ENCODE measurements at regions of chr16 and their contacts with region 1.

Region 1: DNA sequence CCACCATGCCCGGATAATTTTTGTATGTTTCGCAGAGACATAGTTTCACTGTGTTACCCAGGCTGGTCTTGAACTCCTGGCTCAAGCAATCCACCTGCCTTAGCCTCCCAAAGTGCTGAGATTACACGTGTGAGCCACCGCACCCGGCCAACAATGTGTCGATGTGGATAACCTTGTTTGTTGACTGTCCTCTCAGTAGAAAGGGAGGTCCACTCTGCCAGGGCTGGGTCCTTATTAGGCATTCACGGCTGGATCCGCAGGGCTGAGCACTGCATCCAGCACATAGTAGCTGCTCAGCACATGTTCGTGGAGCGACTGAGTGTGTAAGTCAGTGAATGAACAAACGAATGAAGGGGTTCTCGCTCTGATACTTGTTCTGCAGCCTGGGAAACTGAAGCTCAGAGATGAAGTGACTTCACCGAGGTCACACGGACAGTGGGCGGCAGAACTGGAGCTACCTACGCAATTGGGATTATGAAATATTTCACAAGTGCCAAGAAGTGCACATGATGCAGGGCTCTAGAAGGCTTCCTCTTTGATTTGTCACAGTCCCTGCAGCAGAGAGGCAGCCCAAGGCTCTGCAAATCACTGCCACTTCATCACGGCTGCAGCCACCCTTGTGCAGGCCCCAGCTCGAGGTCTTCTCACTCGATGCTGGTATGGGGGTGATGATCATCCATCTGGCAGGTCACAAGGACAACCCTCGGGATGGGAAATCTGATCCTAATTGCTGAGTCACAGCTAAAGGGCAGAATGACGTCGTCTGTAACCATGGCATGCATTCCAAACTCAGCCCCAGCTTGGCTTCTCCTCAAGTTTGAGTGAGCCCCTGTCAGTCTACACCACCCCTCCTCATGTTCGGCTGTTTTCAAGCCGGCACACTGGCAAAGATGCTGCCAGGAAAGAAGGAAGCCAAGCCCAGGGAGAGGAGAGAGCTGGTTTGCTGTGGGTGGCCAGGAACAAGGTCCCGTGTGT is 28.0 kb upstream of the SNN start:
- DNase-seq: no peak
- H3K4me3 ChIP-seq: no peak overlapping the region
- H3K4me3 Mint-ChIP-seq: no peak overlapping the region
- H3K27ac ChIP-seq: no peak overlapping the region
- H3K27ac Mint-ChIP-seq: peak overlapping the region in 1 of 7 donors; percentile 47
- H3K4me1 ChIP-seq: peaks cover 14% of the 10 kb centered on the region
- H3K4me1 Mint-ChIP-seq: peaks cover 5 to 15% (median 12%) of the 10 kb centered on the region in 4 donors
- H3K27me3 ChIP-seq: no peaks in the 10 kb centered on the region
- H3K27me3 Mint-ChIP-seq: no peaks in the 10 kb centered on the region

Region 2: DNA sequence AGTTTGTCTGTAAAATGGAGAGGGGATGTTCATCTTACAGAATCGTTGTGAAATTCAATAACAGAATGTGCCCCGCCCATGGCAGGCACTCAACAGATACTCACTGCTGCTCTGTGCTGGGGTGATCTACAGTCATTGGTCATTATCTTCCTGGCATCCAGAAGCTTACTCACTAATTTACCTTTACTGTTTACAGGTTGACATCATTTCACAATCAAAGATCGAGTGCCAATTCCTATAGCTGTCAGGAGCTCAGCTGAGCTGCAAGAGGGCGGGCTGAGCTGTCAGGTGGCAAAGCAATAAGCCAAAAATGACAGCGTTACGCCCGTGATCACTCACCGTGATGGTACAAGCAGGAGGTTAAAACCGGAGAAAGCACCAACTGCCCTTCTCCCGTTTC is 104.7 kb before region 1 on chr16:
- CTCF ChIA-PET with region 1: interaction called, 206 read pairs
- POLR2A ChIA-PET with region 1: interaction called, 4 read pairs
- intact Hi-C with region 1: loop called (anchors 1 kb)
- DNase-seq: no peak
- H3K4me3 ChIP-seq: no peak overlapping the region
- H3K4me3 Mint-ChIP-seq: no peak overlapping the region
- H3K27ac ChIP-seq: no peak overlapping the region
- H3K27ac Mint-ChIP-seq: no peak overlapping the region
- H3K4me1 ChIP-seq: no peaks in the 10 kb centered on the region
- H3K4me1 Mint-ChIP-seq: peaks cover 5 to 11% (median 10%) of the 10 kb centered on the region in 4 donors
- H3K27me3 ChIP-seq: no peaks in the 10 kb centered on the region
- H3K27me3 Mint-ChIP-seq: no peaks in the 10 kb centered on the region

Region 3: DNA sequence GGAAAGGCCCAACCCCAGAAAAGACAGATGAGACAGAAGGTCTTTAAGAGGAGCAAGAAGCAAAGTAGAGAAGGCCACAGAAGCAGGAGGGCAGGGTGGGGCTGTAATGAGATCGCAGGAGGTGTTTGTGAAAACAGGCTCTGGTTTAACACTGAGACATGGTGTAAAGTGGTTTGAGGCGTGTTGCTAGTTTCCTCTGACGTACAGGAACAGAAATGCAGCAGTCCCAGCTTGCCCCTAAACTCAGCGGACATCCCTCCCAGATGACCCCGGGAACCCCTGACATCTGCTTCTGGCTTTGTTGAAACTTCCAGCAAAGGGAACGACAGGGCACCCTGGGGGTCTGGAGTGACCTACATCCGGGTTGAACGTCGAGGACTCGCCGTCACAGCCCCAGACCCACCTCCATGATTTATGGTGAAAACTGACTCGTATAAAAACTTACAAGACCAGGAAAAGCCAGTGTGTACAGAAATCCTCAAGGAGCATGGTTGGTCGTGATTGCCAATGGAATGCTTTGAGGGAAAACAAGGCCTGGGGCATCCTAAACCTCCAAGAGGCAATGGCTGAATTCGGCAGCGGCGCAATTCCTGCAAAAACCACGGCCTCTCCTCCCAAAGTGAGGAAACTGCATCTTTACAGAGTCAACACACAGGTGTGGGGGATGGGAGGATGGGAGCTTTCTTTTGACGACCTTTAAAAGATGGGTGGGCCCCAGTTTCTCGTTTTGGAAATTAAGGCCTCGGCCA is 79.3 kb before region 1 on chr16:
- CTCF ChIA-PET with region 1: interaction called, 23 read pairs
- POLR2A ChIA-PET with region 1: interaction called, 12 read pairs
- intact Hi-C with region 1: loop called (anchors 1 kb)
- DNase-seq: peak; percentile 84 to 95 (median 86)
- H3K4me3 ChIP-seq: peak overlapping the region; percentile 37 to 60
- H3K4me3 Mint-ChIP-seq: peak overlapping the region; percentile 59 to 91 (median 79)
- H3K27ac ChIP-seq: peak overlapping the region; percentile 86
- H3K27ac Mint-ChIP-seq: peak overlapping the region; percentile 92 to 100 (median 95)
- H3K4me1 ChIP-seq: peaks cover 89% of the 10 kb centered on the region
- H3K4me1 Mint-ChIP-seq: peaks cover 54 to 91% (median 71%) of the 10 kb centered on the region in 4 donors
- H3K27me3 ChIP-seq: no peaks in the 10 kb centered on the region
- H3K27me3 Mint-ChIP-seq: no peaks in the 10 kb centered on the region

Region 4: DNA sequence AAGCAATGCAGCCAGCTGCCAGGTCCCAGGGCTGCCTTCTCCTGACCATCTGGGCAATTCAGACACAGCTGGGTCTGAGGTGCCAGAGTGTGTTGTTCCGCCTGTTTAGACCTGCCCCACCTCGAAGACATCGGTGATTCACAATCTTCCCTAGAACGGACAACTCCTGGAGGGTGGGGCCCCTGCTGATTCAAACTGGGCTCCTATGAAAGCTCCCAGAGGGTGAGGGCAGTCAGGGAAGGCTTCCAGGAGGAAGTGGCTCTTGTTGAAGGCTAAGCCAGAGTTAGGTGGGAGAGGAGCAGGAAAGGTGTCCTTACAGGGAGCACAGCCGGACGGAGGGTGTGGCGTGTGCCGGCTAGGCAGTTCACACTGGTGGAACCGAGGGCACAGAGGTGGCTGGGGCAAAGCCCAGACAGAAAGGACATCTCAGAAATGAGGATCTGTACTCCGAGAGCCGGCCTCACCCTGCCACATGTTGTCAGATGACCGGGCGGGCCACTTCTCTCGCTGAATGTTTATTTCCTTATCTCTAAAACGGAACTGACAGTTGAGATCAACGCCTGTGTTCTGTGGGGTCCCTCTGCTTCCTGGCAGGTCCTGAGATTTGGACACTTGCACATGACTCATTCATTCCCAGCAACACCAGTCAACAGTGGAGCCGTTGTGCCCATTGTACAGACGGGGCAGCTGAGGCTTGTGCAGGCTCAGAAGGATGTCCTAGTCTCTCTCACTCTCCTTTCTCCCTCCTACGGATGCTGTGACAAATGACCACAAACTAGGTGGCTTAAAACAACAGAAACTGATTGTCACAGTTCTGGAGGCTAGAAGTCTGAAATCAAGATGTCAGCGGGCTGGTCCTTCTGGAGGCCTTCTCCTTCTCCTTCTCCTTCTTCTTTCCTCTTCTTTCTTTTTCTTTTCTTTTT is 26.6 kb before region 1 on chr16:
- CTCF ChIA-PET with region 1: interaction called, 12 read pairs
- POLR2A ChIA-PET with region 1: interaction called, 4 read pairs
- intact Hi-C with region 1: no loop called
- DNase-seq: no peak
- H3K4me3 ChIP-seq: no peak overlapping the region
- H3K4me3 Mint-ChIP-seq: peak overlapping the region in 6 of 8 donors; percentile 7 to 61 (median 20)
- H3K27ac ChIP-seq: no peak overlapping the region
- H3K27ac Mint-ChIP-seq: peak overlapping the region in 6 of 7 donors; percentile 22 to 81 (median 74)
- H3K4me1 ChIP-seq: peaks cover 24% of the 10 kb centered on the region
- H3K4me1 Mint-ChIP-seq: peaks cover 12 to 32% (median 22%) of the 10 kb centered on the region in 4 donors
- H3K27me3 ChIP-seq: no peaks in the 10 kb centered on the region
- H3K27me3 Mint-ChIP-seq: no peaks in the 10 kb centered on the region

Region 5: DNA sequence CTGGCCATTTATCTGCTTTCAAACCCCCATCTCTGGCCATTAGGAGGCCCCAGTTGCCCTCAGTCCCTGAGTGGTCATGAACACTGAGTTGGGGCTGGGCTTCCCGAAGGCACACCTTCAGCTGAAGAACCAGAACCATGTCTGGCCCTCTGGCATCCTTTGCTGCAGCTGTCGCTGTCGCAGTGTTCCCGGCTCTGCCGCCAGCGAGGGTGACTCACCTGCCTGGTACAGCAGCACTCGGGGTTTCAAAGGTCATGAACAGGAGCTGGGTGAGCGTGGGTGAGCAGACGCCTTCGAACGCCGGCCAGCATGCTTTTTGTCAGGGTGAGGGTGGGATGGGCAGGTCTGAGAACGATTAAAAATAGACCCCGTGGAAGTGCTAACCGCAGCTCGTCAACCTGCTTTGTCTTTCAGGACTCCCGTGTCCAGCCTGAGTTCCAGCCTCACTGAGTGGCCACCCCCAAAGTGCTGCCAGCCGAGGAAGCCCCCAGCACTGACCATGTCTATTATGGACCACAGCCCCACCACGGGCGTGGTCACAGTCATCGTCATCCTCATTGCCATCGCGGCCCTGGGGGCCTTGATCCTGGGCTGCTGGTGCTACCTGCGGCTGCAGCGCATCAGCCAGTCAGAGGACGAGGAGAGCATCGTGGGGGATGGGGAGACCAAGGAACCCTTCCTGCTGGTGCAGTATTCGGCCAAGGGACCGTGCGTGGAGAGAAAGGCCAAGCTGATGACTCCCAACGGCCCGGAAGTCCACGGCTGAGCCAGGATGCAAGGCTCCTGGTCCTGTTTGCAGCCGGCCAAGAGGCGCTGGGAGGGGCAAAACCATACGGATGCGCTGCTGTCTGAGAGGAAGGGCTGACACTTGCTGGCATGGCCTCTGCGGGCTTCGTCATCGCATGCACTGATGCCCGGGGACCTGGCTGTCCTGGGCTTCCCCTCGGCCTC is 35.6 kb after region 1 on chr16:
- CTCF ChIA-PET with region 1: no interaction called
- POLR2A ChIA-PET with region 1: no interaction called
- intact Hi-C with region 1: no loop called
- DNase-seq: peak in 1 of 5 donors; percentile 51
- H3K4me3 ChIP-seq: no peak overlapping the region
- H3K4me3 Mint-ChIP-seq: no peak overlapping the region
- H3K27ac ChIP-seq: no peak overlapping the region
- H3K27ac Mint-ChIP-seq: peak overlapping the region in 5 of 7 donors; percentile 2 to 89 (median 53)
- H3K4me1 ChIP-seq: peaks cover 52% of the 10 kb centered on the region
- H3K4me1 Mint-ChIP-seq: peaks cover 27 to 86% (median 57%) of the 10 kb centered on the region in 4 donors
- H3K27me3 ChIP-seq: no peaks in the 10 kb centered on the region
- H3K27me3 Mint-ChIP-seq: no peaks in the 10 kb centered on the region

Region 6: GRCh38 chr16:11715246-11715947 is 75.2 kb after region 1 on chr16:
- CTCF ChIA-PET with region 1: interaction called, 29 read pairs
- POLR2A ChIA-PET with region 1: no interaction called
- intact Hi-C with region 1: loop called (anchors 1 kb)
- DNase-seq: no peak
- H3K4me3 ChIP-seq: no peak overlapping the region
- H3K4me3 Mint-ChIP-seq: no peak overlapping the region
- H3K27ac ChIP-seq: no peak overlapping the region
- H3K27ac Mint-ChIP-seq: peak overlapping the region in 1 of 7 donors; percentile 71
- H3K4me1 ChIP-seq: peaks cover 3% of the 10 kb centered on the region
- H3K4me1 Mint-ChIP-seq: peaks cover 12 to 32% (median 21%) of the 10 kb centered on the region in 4 donors
- H3K27me3 ChIP-seq: no peaks in the 10 kb centered on the region
- H3K27me3 Mint-ChIP-seq: no peaks in the 10 kb centered on the region

Region 7: GRCh38 chr16:11806721-11807120 is 166.5 kb after region 1 on chr16:
- CTCF ChIA-PET with region 1: no interaction called
- POLR2A ChIA-PET with region 1: no interaction called
- intact Hi-C with region 1: no loop called
- DNase-seq: no peak
- H3K4me3 ChIP-seq: no peak overlapping the region
- H3K4me3 Mint-ChIP-seq: no peak overlapping the region
- H3K27ac ChIP-seq: no peak overlapping the region
- H3K27ac Mint-ChIP-seq: no peak overlapping the region
- H3K4me1 ChIP-seq: no peaks in the 10 kb centered on the region
- H3K4me1 Mint-ChIP-seq: peaks cover 4 to 12% (median 9%) of the 10 kb centered on the region in 4 donors
- H3K27me3 ChIP-seq: no peaks in the 10 kb centered on the region
- H3K27me3 Mint-ChIP-seq: peaks cover 0 to 1% of the 10 kb centered on the region in 2 donors